ENCODE measurements at regions of chr12 and their contacts with region 1.

Region 1: DNA sequence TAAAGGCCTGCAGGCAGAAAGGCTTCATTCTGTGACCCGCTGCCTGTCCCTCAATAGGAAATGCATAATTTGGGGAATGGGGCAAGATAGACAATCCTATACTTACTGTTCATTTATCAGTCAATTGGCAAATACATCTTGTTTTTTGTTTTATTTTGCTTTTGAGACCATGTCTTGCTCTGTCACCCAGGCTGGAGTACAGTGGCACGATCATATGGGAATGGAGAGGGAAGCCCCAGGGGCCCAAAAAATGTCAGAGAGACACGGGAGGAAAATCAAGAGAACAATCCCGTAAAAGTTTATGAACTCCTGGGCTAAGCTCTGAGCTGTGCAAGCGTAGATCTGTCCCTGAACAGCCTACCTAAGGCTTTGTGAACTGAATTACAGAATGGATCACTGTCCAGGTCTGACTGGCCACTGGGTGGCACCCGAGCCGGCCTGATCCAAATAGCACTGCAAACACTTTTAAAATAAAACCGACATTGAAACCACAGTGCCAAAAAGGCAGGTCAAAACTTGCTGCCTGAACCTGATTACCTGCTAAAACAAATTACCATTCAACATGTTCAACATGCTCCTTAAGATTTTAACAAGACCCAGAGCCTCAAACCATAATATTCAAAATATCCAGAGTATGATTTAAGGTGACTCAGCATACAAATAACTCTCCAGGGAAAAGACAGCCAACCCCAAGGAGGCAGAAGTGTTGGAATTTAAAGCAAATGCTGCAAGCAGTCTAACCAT is 11.8 kb downstream of the COPS7A start:
- DNase-seq: peak; percentile 70 to 81
- H3K4me3 ChIP-seq: no peak overlapping the region
- H3K4me3 Mint-ChIP-seq: no peak overlapping the region
- H3K27ac Mint-ChIP-seq: peak overlapping the region; percentile 24
- H3K4me1 ChIP-seq: no peaks in the 10 kb centered on the region
- H3K4me1 Mint-ChIP-seq: peaks cover 8% of the 10 kb centered on the region
- H3K27me3 ChIP-seq: no peaks in the 10 kb centered on the region
- H3K27me3 Mint-ChIP-seq: no peaks in the 10 kb centered on the region
- CTCF ChIP-seq: peak; percentile 94

Region 2: DNA sequence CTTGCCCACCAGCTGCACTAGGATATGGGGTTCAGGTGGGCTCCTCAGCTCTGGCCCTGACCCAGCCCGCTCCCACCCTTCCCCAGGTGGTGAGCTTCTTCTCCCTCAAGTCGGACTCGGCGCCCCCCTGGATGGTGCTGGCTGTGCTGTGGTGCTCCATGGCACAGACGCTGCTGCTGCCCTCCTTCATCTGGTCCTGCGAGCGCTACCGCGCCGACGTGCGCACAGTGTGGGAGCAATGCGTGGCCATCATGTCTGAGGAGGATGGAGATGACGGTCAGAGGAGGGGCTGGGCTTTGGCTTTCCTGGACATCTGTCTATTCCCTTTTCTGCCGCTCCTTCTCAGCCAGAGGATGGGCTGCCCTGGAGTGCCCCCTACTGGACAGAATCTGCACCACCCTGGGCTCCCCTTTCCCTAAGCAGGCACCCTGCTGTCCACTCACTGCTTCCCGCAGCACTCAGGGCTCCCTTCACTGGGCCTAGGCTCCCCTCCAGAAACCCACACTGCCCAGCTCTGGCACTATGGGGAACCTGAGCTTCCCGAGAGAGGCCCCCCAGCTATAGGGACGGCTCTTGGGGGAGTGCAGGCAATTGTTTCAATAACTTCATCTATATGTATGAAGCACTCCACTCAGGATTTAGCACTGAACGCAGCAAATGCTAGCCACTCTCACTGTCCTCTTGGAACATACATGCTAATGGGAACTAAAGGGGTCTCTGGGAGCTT is 89.9 kb after region 1 on chr12:
- CTCF ChIA-PET with region 1: no interaction called
- POLR2A ChIA-PET with region 1: interaction called, 3 read pairs
- intact Hi-C with region 1: loop called (anchors 1 kb)
- DNase-seq: peak; percentile 87 to 93
- H3K4me3 ChIP-seq: no peak overlapping the region
- H3K4me3 Mint-ChIP-seq: no peak overlapping the region
- H3K27ac Mint-ChIP-seq: no peak overlapping the region
- H3K4me1 ChIP-seq: peaks cover 23% of the 10 kb centered on the region
- H3K4me1 Mint-ChIP-seq: peaks cover 14% of the 10 kb centered on the region
- H3K27me3 ChIP-seq: no peaks in the 10 kb centered on the region; the same call in 1 of the 2 replicates
- H3K27me3 Mint-ChIP-seq: peaks cover 26% of the 10 kb centered on the region
- CTCF ChIP-seq: peak; percentile 97 to 98

Region 3: DNA sequence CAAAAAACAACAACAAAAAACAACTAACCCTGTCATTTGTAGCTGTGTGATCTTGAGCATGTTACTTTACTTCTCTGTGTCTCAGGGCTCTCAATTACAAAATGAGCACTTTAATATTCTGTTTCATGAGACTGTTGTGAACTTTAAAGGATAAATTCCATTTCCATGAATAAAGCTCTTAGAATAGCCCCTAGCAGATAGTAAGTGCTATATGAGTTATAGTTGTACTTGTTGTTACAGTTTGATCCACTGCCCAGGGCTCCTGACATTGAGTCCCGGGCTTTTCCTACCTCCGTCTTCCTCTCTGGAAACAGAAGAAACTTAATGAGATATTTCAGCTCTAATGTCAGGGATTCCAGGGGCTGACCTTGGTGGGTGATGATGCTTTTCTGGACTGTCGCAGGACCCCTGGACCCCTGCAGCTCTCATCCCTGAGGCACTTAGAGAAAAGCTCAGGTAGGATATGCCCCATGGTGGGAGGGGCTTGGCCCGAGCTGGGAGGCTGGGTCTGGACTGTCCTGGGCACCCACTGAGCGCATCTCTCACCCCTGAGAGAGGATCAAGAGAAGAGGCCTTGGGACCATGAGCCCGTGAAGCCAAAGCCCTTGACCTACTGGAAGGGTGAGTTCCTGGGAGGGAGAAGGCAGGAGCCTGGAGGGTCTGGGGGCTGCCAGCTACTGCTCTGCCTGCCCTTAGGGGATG is 97.7 kb after region 1 on chr12:
- CTCF ChIA-PET with region 1: interaction called, 5 read pairs
- POLR2A ChIA-PET with region 1: no interaction called
- intact Hi-C with region 1: loop called (anchors 1 kb)
- DNase-seq: no peak
- H3K4me3 ChIP-seq: no peak overlapping the region
- H3K4me3 Mint-ChIP-seq: no peak overlapping the region
- H3K27ac Mint-ChIP-seq: no peak overlapping the region
- H3K4me1 ChIP-seq: peaks cover 14% of the 10 kb centered on the region
- H3K4me1 Mint-ChIP-seq: peaks cover 21% of the 10 kb centered on the region
- H3K27me3 ChIP-seq: no peaks in the 10 kb centered on the region; the same call in 1 of the 2 replicates
- H3K27me3 Mint-ChIP-seq: no peaks in the 10 kb centered on the region
- CTCF ChIP-seq: no peak